Dendritic cell treated with granulocyte-macrophage colony-stimulating factor and Interleukin-4, amounts not matched to agents 40 ng/mL and 50 ng/mL, for 4 days (primary cell): ENCODE measurements at regions of chr3 and their contacts with region 1.

Region 1: GRCh38 chr3:14124615-14125190 is at the starts of genes CHCHD4 and TMEM43:
- H3K4me3 Mint-ChIP-seq: peak within 1 kb of the TSS; percentile 99
- H3K27ac Mint-ChIP-seq: peak within 1 kb of the TSS; percentile 97
- H3K4me1 Mint-ChIP-seq: peaks cover 68% of the 10 kb centered on the region
- H3K27me3 Mint-ChIP-seq: no peaks in the 10 kb centered on the region

Region 2: DNA sequence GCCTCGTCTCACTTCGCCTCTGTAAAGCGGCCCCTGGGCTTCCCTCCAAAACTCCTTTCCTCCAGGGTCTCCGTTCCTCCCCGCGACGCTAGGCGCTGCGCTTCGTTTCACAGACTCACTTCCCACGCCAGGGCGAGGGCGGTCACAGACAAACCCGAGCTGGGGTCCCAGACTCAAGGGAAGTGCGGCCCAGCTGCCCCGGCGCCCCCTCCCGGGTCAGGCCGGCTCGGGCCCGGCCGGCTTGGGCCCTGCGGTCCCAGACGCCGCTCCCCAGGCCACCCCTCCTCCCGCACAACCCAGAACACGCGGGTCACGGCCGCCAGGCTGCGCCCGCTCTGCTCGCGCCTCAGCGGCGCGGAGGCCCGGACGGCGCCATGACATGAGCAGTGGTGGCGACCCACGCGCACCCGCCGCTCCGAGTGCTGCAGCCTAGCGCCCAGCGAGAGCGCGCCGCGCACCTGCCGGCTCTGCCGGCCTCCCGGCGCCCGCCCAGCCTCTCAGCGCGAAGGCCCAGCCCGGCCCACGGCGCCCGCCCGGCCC is 705.1 kb before region 1 on chr3:
- intact Hi-C with region 1: no loop called
- H3K4me3 Mint-ChIP-seq: peak overlapping the region; percentile 83
- H3K27ac Mint-ChIP-seq: peak overlapping the region; percentile 86
- H3K4me1 Mint-ChIP-seq: peaks cover 59% of the 10 kb centered on the region
- H3K27me3 Mint-ChIP-seq: no peaks in the 10 kb centered on the region

Region 3: DNA sequence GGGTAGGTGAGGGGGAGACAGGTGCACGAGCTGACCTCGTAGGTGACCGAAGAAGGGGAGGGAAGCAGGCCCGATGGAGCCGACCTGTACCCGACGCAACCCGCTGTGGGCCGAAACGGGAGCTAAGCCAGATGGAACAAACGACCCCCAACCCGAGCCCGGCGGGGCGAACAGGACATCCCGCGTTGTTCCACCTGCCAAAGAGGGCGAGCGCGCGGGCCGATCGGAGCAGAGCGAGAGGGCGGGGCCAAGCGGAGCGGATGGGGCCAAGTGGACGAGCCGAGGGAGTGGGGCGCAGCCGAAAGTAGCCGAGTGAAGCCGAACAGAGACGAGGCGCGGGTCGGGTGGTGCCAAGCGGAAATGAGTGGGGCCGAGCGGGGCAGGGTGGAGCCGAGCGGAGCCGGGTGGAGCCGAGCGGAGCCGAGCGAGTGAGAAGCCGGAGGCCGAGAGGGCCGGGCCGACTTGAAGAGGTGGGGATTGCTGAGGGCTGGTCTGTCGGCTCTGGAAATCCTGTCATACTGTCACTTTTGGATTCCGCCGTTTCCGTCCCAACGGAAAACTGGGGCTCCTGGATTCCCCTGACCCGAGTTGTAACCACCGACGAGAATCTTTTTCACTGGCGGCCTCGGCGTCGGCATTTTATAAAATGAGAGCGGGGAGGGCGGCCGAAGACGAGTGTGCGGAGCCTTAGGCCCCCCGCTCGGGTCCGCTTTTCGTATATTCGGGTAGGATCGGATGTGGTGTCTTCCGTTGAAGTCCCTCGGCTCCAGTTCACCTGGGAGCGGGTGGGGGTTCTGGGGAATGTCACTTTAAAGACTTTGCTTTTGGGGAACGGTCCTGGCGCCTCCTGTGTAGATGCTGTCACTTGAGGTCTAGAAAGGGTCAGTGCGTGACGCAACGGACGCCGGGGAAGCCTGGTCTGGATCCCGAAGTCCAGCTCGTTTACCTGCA is 229.3 kb before region 1 on chr3:
- intact Hi-C with region 1: loop called (anchors 10 kb)
- H3K4me3 Mint-ChIP-seq: peak overlapping the region; percentile 83
- H3K27ac Mint-ChIP-seq: peak overlapping the region; percentile 80
- H3K4me1 Mint-ChIP-seq: peaks cover 21% of the 10 kb centered on the region
- H3K27me3 Mint-ChIP-seq: peaks cover 32% of the 10 kb centered on the region

Region 4: DNA sequence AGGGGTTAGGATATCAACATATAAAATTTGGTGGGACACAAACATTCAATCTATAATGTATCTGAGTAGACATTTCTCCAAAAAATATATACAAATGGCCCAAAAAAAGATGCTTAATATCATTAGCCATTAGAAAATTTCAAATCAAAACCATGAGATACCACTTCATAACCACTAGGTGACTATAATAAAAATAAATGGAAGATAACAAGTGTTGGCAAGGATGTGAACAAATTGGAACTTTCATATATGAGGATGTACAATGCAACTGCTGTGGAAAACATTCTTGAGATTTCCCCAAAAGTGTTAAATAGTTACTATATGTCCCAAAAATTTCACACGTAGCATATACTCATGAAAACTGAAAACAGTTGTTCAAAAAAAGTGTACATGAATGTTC is 208.3 kb before region 1 on chr3:
- intact Hi-C with region 1: no loop called
- H3K4me3 Mint-ChIP-seq: no peak overlapping the region
- H3K27ac Mint-ChIP-seq: no peak overlapping the region
- H3K4me1 Mint-ChIP-seq: no peaks in the 10 kb centered on the region
- H3K27me3 Mint-ChIP-seq: peaks cover 4% of the 10 kb centered on the region

Region 5: GRCh38 chr3:14077310-14077709 is 47.4 kb before region 1 on chr3:
- intact Hi-C with region 1: no loop called
- H3K4me3 Mint-ChIP-seq: no peak overlapping the region
- H3K27ac Mint-ChIP-seq: no peak overlapping the region
- H3K4me1 Mint-ChIP-seq: no peaks in the 10 kb centered on the region
- H3K27me3 Mint-ChIP-seq: peaks cover 2% of the 10 kb centered on the region

Region 6: GRCh38 chr3:14144423-14145075 is 19.8 kb after region 1 on chr3:
- intact Hi-C with region 1: loop called (anchors 1 kb)
- H3K4me3 Mint-ChIP-seq: peak overlapping the region; percentile 71
- H3K27ac Mint-ChIP-seq: peak overlapping the region; percentile 88
- H3K4me1 Mint-ChIP-seq: peaks cover 85% of the 10 kb centered on the region
- H3K27me3 Mint-ChIP-seq: no peaks in the 10 kb centered on the region

Region 7: GRCh38 chr3:14154895-14155440 is 30.3 kb after region 1 on chr3:
- intact Hi-C with region 1: loop called (anchors 5 kb)
- H3K4me3 Mint-ChIP-seq: no peak overlapping the region
- H3K27ac Mint-ChIP-seq: peak overlapping the region; percentile 74
- H3K4me1 Mint-ChIP-seq: peaks cover 27% of the 10 kb centered on the region
- H3K27me3 Mint-ChIP-seq: no peaks in the 10 kb centered on the region

Region 8: GRCh38 chr3:14178247-14179113 is 53.8 kb after region 1 on chr3 and contains the starts of genes LSM3 and XPC:
- intact Hi-C with region 1: loop called (anchors 1 kb)
- H3K4me3 Mint-ChIP-seq: peak within 1 kb of the TSS; percentile 91
- H3K27ac Mint-ChIP-seq: peak within 1 kb of the TSS; percentile 98
- H3K4me1 Mint-ChIP-seq: peaks cover 43% of the 10 kb centered on the region
- H3K27me3 Mint-ChIP-seq: no peaks in the 10 kb centered on the region

Region 9: DNA sequence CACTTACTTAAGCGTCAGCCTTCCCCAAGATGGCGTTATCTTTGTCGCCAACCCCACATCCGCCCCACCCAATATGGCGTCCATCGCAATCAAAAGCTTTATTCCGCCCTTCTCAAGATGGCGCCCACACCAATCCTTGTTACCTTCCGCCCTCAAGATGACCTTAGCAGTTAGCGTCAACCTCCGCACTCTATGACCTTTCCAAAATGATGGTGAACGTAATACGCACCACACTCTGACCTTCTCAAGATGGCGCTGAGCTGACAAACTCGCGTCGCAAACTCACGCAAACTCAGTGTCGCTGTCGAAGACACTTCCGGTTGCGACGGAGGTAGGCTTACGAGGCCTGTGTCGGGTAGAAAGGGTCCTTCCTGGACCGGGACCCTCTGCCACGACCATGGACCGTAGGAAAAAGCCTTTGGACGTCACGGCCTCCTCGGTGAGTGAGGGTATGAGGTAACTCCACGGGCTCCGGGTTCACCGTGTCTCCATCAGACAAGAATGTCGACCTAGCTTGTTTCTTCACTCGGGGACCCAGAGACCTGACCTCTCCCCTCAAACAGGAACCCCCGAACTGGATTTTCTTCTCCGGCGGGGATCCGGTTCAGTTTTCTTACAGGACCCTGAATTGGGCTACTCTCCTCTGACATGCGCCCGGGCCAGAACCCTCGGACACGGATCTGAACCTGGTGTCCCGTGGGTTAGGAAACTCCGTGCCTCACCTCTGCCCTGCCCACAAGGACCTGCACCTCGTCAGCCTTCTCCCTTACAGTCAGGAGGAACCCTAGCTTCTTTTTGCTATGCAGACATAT is 526.9 kb after region 1 on chr3 and contains the start of gene CCDC174:
- intact Hi-C with region 1: loop called (anchors 2 kb)
- H3K4me3 Mint-ChIP-seq: peak within 1 kb of the TSS; percentile 100
- H3K27ac Mint-ChIP-seq: peak within 1 kb of the TSS; percentile 96
- H3K4me1 Mint-ChIP-seq: peaks cover 41% of the 10 kb centered on the region
- H3K27me3 Mint-ChIP-seq: no peaks in the 10 kb centered on the region

Region 10: GRCh38 chr3:14947886-14948555 is 823.3 kb after region 1 on chr3:
- intact Hi-C with region 1: loop called (anchors 5 kb)
- H3K4me3 Mint-ChIP-seq: peak overlapping the region; percentile 100
- H3K27ac Mint-ChIP-seq: peak overlapping the region; percentile 100
- H3K4me1 Mint-ChIP-seq: peaks cover 42% of the 10 kb centered on the region
- H3K27me3 Mint-ChIP-seq: no peaks in the 10 kb centered on the region

Region 11: GRCh38 chr3:15527031-15527459 is 1402.3 kb after region 1 on chr3:
- intact Hi-C with region 1: no loop called
- H3K4me3 Mint-ChIP-seq: no peak overlapping the region
- H3K27ac Mint-ChIP-seq: no peak overlapping the region
- H3K4me1 Mint-ChIP-seq: peaks cover 6% of the 10 kb centered on the region
- H3K27me3 Mint-ChIP-seq: no peaks in the 10 kb centered on the region